CD14-positive monocyte (primary cell): ENCODE measurements at regions of chr22 and their contacts with region 1.

Region 1: GRCh38 chr22:50341977-50342650 is 1.0 kb upstream of the PPP6R2 start:
- DNase-seq: peak; percentile 82 to 87 (median 86)
- H3K4me3 ChIP-seq: peak overlapping the region; percentile 52 to 87 (median 53)
- H3K4me3 Mint-ChIP-seq: peak overlapping the region; percentile 77 to 80
- H3K27ac ChIP-seq: peak overlapping the region in 1 of 2 donors; percentile 65
- H3K27ac Mint-ChIP-seq: peak overlapping the region; percentile 60 to 86 (median 65)
- H3K4me1 ChIP-seq: peaks cover 12 to 25% of the 10 kb centered on the region in 2 donors
- H3K4me1 Mint-ChIP-seq: peaks cover 9% of the 10 kb centered on the region
- H3K27me3 ChIP-seq: no peaks in the 10 kb centered on the region
- H3K27me3 Mint-ChIP-seq: peaks cover 2 to 4% (median 4%) of the 10 kb centered on the region in 3 donors
- CTCF ChIP-seq: peak; percentile 89

Region 2: DNA sequence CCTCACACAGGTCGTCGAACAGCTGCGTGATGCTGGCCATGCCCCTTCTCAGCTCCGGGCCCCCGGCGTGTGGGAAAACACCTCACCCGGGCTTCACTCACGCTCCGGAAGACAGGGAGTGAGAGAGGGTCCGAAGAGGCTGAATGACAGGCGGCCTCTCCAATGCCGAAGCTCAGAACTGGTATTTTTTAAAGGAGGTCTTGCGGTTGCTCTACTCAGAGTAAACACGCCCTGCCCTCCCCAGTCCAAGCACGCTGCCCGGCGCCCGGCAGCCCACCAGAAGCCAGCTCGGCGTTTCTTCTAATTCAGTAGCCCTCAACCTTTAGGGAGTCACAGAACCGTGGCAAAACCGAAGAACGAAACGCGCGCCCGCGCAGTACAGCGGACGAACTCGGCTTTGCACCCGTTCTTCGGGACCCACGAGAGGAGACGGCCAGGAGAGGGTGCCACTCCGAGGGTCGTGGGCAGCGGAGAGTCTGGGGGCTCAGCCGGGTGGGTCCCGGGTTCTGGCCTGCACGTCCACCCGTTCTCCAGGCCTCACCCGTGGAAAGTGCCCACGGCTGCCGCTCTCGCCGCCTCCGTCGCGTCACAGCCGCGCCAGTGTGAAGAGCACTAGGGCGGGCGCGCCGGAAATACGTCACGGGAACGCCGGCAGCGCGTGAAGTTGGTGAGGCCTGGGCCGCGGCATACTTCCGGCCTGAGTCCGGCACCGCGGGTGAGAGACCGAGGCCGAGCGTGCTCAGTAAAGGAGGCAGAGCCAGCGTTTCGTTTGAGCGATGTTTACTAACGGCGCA is 97.5 kb before region 1 on chr22 and contains the start of gene TUBGCP6:
- intact Hi-C with region 1: loop called in 1 of 2 experiments (anchors 2 kb)
- DNase-seq: peak; percentile 89 to 93 (median 93)
- H3K4me3 ChIP-seq: peak within 1 kb of the TSS; percentile 77 to 99 (median 98)
- H3K4me3 Mint-ChIP-seq: peak within 1 kb of the TSS; percentile 96 to 98
- H3K27ac ChIP-seq: peak within 1 kb of the TSS; percentile 87 to 96
- H3K27ac Mint-ChIP-seq: peak within 1 kb of the TSS; percentile 97 to 100 (median 99)
- H3K4me1 ChIP-seq: peaks cover 53 to 60% of the 10 kb centered on the region in 2 donors
- H3K4me1 Mint-ChIP-seq: peaks cover 45% of the 10 kb centered on the region
- H3K27me3 ChIP-seq: no peaks in the 10 kb centered on the region
- H3K27me3 Mint-ChIP-seq: no peaks in the 10 kb centered on the region
- CTCF ChIP-seq: no peak
- polyA plus RNA-seq, gene TUBGCP6: 3.7 to 72.8 (median 4.3) TPM

Region 3: GRCh38 chr22:50276143-50276542 is 66.0 kb before region 1 on chr22:
- intact Hi-C with region 1: loop called (anchors 1 to 5 kb)
- DNase-seq: peak; percentile 66 to 86 (median 82)
- H3K4me3 ChIP-seq: no peak overlapping the region
- H3K4me3 Mint-ChIP-seq: no peak overlapping the region
- H3K27ac ChIP-seq: no peak overlapping the region
- H3K27ac Mint-ChIP-seq: peak overlapping the region in 2 of 7 donors; percentile 50 to 76
- H3K4me1 ChIP-seq: peaks cover 10 to 18% of the 10 kb centered on the region in 2 donors
- H3K4me1 Mint-ChIP-seq: peaks cover 15% of the 10 kb centered on the region
- H3K27me3 ChIP-seq: peaks cover 3 to 11% of the 10 kb centered on the region in 2 donors
- H3K27me3 Mint-ChIP-seq: peaks cover 6 to 23% (median 16%) of the 10 kb centered on the region in 3 donors
- CTCF ChIP-seq: peak; percentile 88